A549 (cell line): ENCODE measurements at regions of chr19 and their contacts with region 1.

Region 1: DNA sequence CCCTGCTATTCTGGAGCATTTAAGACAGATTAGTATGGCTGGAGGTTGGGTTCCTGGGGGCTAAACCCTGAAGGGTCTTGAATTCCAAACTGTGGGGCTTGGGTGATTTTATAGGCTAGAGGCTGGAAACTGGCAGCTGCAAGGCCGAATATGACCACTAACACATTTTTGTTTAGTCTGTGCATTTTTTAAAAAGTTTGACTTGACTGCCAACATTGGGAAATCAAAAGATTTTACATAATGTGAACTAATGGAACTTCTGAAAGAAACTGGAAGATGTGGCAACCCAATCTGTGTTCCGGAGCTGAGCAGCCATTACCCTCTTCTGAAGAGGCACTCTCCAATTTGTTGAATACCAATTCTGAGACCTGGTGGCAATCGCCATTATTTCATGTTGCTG is 5.1 kb downstream of the ZNF784 start:
- DNase-seq: no peak
- ATAC-seq: no peak
- H3K4me3 ChIP-seq: no peak overlapping the region
- H3K27ac ChIP-seq: no peak overlapping the region
- H3K4me1 ChIP-seq: 0 out of 3 replicates have a peak, but pooled peaks cover 4% of the 10 kb centered on the region
- CTCF ChIP-seq: no peak
- EP300 ChIP-seq: no peak
- POLR2A ChIP-seq: no peak
- RAD21 ChIP-seq: no peak

Region 2: DNA sequence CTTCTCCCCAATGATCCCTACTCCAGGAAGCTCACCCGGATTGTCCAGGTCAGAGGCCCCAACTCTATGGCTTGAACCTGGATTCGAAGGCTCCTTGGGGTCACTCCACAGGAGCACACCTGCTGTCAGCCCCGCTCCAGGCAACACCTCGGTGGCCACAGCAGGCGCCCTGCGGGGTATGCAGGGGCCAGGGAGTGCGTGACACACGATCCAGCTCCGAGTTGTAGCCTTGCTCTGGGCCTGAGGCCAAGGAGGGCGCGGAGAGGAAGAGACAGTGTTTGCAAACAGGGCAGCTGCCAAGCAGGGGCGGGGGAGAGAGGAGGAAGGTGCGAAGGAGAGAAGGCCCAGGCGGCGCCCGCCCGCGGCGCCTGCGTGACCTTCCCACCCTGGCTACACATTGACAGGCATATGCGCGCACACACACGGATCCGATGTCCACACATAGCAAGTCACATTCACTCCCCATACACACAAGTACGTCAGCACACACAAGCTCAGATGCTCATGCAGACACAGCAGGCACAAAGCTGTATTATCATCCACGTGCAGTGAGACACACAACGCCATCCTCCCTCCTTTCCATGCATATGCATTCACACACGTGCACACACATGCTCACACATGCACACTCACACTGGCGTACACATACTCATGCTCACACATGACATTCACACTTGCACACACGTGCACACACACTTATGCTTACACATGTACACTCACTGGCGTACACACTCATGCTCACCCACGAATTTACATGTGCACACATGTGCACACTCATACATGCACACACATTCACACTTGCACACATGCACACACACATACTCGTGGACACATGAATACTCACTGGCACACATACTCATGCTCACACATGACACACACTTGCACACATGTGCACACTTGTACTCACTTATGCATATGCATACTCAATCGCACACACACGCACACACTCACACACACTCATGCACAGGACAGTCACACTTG is 92.8 kb before region 1 on chr19:
- CTCF ChIA-PET with region 1: interaction called, 4 read pairs
- POLR2A ChIA-PET with region 1: interaction called, 11 read pairs
- DNase-seq: peak; percentile 82 to 95
- ATAC-seq: peak; percentile 79 to 88
- H3K4me3 ChIP-seq: no peak overlapping the region
- H3K27ac ChIP-seq: peak overlapping the region; percentile 64 to 78
- H3K4me1 ChIP-seq: peaks cover 48% of the 10 kb centered on the region
- CTCF ChIP-seq: no peak
- EP300 ChIP-seq: peak in 1 of 2 experiments; percentile 43; a peak in 1 of 5 replicates
- POLR2A ChIP-seq: no peak
- RAD21 ChIP-seq: peak in 1 of 2 experiments; percentile 9; a peak in 1 of 5 replicates

Region 3: GRCh38 chr19:55703790-55704215 is 84.5 kb after region 1 on chr19:
- CTCF ChIA-PET with region 1: no interaction called
- POLR2A ChIA-PET with region 1: no interaction called
- DNase-seq: peak in 1 of 2 experiments; percentile 41
- ATAC-seq: peak in 1 of 2 experiments; percentile 63; a peak in 3 of 6 replicates
- H3K4me3 ChIP-seq: no peak overlapping the region
- H3K27ac ChIP-seq: no peak overlapping the region
- H3K4me1 ChIP-seq: no peaks in the 10 kb centered on the region
- CTCF ChIP-seq: no peak
- EP300 ChIP-seq: no peak
- POLR2A ChIP-seq: no peak
- RAD21 ChIP-seq: 0 out of 5 replicates have a peak, but pooled peaks of 1 of the 2 experiments have one; percentile 12